GM12878 (cell line): ENCODE measurements at regions of chr3 and their contacts with region 1.

Region 1: DNA sequence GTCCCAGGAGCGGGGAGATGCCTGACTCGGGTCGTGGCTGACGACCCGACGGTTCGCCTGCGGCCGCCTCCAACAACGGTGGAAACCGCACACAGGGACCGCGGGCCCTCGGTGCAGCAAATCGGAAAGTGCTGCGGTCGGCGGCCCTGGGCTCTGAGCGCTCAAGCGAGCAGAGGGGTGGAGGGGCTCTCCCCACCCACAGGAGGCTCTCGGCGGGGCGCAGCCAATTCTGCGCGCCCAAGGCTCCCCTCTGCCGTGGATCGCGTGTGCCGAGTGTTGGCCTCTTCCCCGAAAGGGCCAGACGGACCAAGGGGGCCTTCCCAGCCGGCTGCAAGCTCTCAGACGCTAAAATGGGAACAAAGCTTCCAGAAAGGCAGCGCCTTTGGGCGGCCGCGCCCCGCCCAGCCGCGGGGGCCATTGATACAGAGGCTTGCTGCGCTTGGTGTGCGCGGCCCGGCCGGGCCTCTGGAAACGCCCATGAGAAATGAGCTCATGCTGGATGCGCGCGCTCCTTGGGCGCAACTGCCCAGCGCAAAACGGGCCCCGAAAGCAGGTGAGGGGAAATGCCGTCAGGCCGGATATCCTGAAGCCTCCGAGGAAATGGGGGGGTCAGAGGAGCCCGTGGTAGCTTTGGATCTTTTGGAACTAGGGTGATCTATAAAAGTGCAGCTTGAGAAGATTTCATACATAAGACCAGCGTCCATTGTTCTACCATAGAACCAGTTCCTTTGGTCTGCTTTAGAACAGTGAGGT is 1.2 kb upstream of the GSK3B start:
- DNase-seq: peak; percentile 68
- ATAC-seq: peak; percentile 66
- H3K4me3 ChIP-seq: peak overlapping the region; percentile 93
- H3K27ac ChIP-seq: peak overlapping the region; percentile 94
- H3K4me1 ChIP-seq: no peaks in the 10 kb centered on the region
- H3K27me3 ChIP-seq: no peaks in the 10 kb centered on the region
- CTCF ChIP-seq: no peak
- EP300 ChIP-seq: peak; percentile 5 to 72; a peak in 3 of 4 replicates
- POLR2A ChIP-seq: peak; percentile 92
- RAD21 ChIP-seq: no peak

Region 2: GRCh38 chr3:119293871-119294695 is 801.3 kb before region 1 on chr3 and contains the start of gene ARHGAP31:
- CTCF ChIA-PET with region 1: no interaction called
- POLR2A ChIA-PET with region 1: no interaction called
- RAD21 ChIA-PET with region 1: no interaction called
- SMC1A ChIA-PET with region 1: no interaction called
- in situ Hi-C with region 1: no loop called
- intact Hi-C with region 1: loop called (anchors 10 kb)
- DNase-seq: peak; percentile 62
- ATAC-seq: peak; percentile 82
- H3K4me3 ChIP-seq: peak within 1 kb of the TSS; percentile 94
- H3K27ac ChIP-seq: peak within 1 kb of the TSS; percentile 96
- H3K4me1 ChIP-seq: peaks cover 27% of the 10 kb centered on the region
- H3K27me3 ChIP-seq: no peaks in the 10 kb centered on the region
- CTCF ChIP-seq: no peak
- EP300 ChIP-seq: peak in 1 of 2 experiments; percentile 14; a peak in 1 of 4 replicates
- POLR2A ChIP-seq: peak; percentile 81
- RAD21 ChIP-seq: no peak
- polyA plus RNA-seq, gene ARHGAP31: 0.97 to 1.6 TPM

Region 3: DNA sequence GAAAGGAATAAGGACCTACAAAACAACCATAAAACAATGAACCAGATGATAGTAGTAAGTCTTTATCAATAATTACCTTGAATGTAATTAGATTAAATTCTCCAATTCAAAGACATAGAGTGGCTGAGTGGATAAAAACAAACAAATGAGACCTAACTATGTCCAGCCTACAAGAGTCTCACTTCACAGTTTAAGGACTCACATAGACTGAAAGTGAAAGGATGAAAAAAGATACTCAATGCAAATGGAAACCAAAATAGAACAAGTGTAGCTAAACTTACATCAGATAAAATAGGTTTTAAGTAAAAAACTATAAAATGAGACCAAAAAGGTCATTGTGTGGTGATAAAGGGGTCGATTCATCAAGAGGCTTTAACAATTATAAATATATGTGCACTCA is 335.4 kb before region 1 on chr3:
- CTCF ChIA-PET with region 1: no interaction called
- POLR2A ChIA-PET with region 1: no interaction called
- RAD21 ChIA-PET with region 1: no interaction called
- SMC1A ChIA-PET with region 1: no interaction called
- in situ Hi-C with region 1: no loop called
- intact Hi-C with region 1: no loop called
- DNase-seq: no peak
- ATAC-seq: peak; percentile 90
- H3K4me3 ChIP-seq: no peak overlapping the region
- H3K27ac ChIP-seq: no peak overlapping the region
- H3K4me1 ChIP-seq: no peaks in the 10 kb centered on the region; the same call in 1 of the 2 replicates
- H3K27me3 ChIP-seq: no peaks in the 10 kb centered on the region
- CTCF ChIP-seq: no peak
- EP300 ChIP-seq: no peak
- POLR2A ChIP-seq: no peak
- RAD21 ChIP-seq: no peak

Region 4: GRCh38 chr3:119891944-119892721 is 203.3 kb before region 1 on chr3:
- CTCF ChIA-PET with region 1: interaction called, 10 read pairs
- POLR2A ChIA-PET with region 1: no interaction called
- RAD21 ChIA-PET with region 1: interaction called, 10 read pairs
- SMC1A ChIA-PET with region 1: interaction called, 7 read pairs
- in situ Hi-C with region 1: no loop called
- intact Hi-C with region 1: loop called (anchors 2 kb)
- DNase-seq: peak; percentile 30
- ATAC-seq: peak; percentile 88
- H3K4me3 ChIP-seq: no peak overlapping the region
- H3K27ac ChIP-seq: no peak overlapping the region
- H3K4me1 ChIP-seq: no peaks in the 10 kb centered on the region
- H3K27me3 ChIP-seq: no peaks in the 10 kb centered on the region
- CTCF ChIP-seq: peak; percentile 57 to 70 (median 66)
- EP300 ChIP-seq: no peak
- POLR2A ChIP-seq: no peak
- RAD21 ChIP-seq: peak; percentile 97

Region 5: GRCh38 chr3:119937229-119937628 is 158.2 kb before region 1 on chr3:
- CTCF ChIA-PET with region 1: interaction called, 5 read pairs
- POLR2A ChIA-PET with region 1: interaction called, 3 read pairs
- RAD21 ChIA-PET with region 1: interaction called, 5 read pairs
- SMC1A ChIA-PET with region 1: interaction called, 4 read pairs
- in situ Hi-C with region 1: no loop called
- intact Hi-C with region 1: loop called (anchors 5 kb)
- DNase-seq: peak; percentile 78
- ATAC-seq: peak; percentile 99
- H3K4me3 ChIP-seq: peak overlapping the region; percentile 34
- H3K27ac ChIP-seq: peak overlapping the region; percentile 30; the same call in 1 of the 2 replicates
- H3K4me1 ChIP-seq: peaks cover 9% of the 10 kb centered on the region
- H3K27me3 ChIP-seq: no peaks in the 10 kb centered on the region
- CTCF ChIP-seq: no peak
- EP300 ChIP-seq: peak in 1 of 2 experiments; percentile 44; a peak in 1 of 4 replicates
- POLR2A ChIP-seq: no peak
- RAD21 ChIP-seq: peak; percentile 10; the same call in 1 of the 2 replicates

Region 6: DNA sequence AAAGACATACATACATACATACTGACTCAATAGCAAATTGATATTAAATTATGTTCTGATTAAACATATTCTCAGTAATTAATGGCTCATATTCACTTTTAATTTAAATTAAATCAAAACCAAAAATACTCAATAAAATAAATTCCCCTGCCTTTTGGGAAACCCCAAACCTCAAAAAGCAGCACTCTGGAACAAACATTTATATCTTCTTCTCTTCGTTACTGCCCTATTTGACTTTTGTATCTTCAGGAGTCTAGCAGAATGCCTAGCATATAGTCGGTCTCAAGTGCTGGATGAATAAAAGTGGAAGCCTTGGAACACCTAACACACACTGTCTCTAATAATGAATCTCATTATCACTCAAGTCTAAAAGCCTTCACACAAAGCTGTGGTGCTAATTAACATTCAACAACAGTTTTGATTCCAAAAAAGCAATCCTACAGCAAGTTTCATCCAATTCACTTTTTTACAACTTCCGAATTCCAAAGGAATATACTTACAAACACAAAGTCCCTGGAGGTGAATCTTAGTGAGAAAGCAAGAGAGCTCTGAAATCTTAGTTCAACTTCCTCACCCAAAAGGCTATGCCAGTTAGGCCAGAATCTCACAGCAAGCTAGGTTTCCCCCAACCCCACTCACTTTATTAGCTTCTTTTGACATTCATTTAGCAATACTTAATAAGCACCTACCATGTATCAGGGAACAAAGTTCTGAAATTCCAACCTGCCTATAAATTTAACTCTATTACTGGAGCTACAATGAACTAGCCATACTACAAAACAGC is 36.1 kb before region 1 on chr3:
- CTCF ChIA-PET with region 1: interaction called, 4 read pairs
- POLR2A ChIA-PET with region 1: interaction called, 8 read pairs
- RAD21 ChIA-PET with region 1: interaction called, 6 read pairs
- SMC1A ChIA-PET with region 1: interaction called, 10 read pairs
- in situ Hi-C with region 1: no loop called
- intact Hi-C with region 1: loop called (anchors 5 kb)
- DNase-seq: no peak
- ATAC-seq: peak; percentile 69
- H3K4me3 ChIP-seq: no peak overlapping the region; the same call in 1 of the 2 replicates
- H3K27ac ChIP-seq: peak overlapping the region; percentile 16; the same call in 1 of the 2 replicates
- H3K4me1 ChIP-seq: peaks cover 7% of the 10 kb centered on the region
- H3K27me3 ChIP-seq: no peaks in the 10 kb centered on the region
- CTCF ChIP-seq: no peak
- EP300 ChIP-seq: no peak
- POLR2A ChIP-seq: no peak
- RAD21 ChIP-seq: no peak

Region 7: DNA sequence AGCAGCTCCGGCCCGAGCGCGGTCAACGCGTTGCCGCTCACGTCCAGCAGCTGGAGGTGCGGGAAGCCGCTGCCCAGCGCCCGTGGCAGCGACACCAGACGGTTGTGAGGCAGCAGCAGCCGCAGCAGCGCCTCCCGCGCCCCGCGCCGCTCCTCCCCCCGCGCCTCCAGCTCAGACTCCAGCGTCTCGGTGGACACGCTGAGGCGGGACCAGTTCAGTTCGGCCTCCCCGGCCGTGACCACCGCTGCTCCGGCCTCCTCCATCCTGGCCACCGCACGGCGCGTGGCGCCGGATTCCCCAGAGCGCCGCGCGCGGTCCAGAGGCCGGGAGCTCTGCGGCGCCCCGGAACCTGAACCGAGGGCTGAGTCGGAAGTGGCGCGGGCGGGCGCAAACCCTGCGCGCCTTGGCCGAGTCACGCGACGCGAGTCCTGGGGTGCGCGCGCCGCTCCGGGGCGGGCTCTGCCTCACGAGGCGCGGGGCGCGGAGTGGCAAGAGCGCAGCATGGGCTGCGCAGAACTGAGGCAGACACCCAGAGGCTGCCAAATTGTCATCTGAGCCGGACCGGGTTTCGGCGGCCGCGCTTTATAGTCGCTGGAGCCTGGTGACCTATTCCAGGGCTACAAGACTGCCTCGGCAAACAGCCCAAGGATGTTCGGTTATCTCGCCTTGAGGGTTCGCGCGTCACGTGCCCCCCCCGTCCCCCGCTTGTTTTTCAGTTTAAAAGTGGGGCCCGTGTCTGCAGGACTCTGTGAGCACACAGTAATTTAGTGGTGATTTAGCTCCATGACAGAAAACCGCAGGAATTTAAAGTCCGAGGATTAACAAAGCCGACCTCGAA is 253.8 kb after region 1 on chr3 and contains the start of gene LRRC58:
- CTCF ChIA-PET with region 1: interaction called, 3 read pairs
- POLR2A ChIA-PET with region 1: interaction called, 15 read pairs
- RAD21 ChIA-PET with region 1: interaction called, 4 read pairs
- SMC1A ChIA-PET with region 1: interaction called, 8 read pairs
- in situ Hi-C with region 1: no loop called
- intact Hi-C with region 1: loop called (anchors 2 kb)
- DNase-seq: peak; percentile 56
- ATAC-seq: peak; percentile 91
- H3K4me3 ChIP-seq: peak within 1 kb of the TSS; percentile 95
- H3K27ac ChIP-seq: peak within 1 kb of the TSS; percentile 86
- H3K4me1 ChIP-seq: peaks cover 7% of the 10 kb centered on the region; the same call in 1 of the 2 replicates
- H3K27me3 ChIP-seq: no peaks in the 10 kb centered on the region
- CTCF ChIP-seq: peak in 2 of 3 experiments; percentile 25 to 33; a peak in 3 of 6 replicates
- EP300 ChIP-seq: no peak
- POLR2A ChIP-seq: peak; percentile 97
- RAD21 ChIP-seq: no peak
- polyA plus RNA-seq, gene LRRC58: 7.7 to 8.0 TPM